Activated CD4-positive, alpha-beta T cell treated with anti-CD3 and anti-CD28 coated beads, Interleukin-2, amount 10 ng/mL, durations not matched to agents 24 days and 14 days (primary cell): ENCODE measurements at regions of chr7 and their contacts with region 1.

Region 1: DNA sequence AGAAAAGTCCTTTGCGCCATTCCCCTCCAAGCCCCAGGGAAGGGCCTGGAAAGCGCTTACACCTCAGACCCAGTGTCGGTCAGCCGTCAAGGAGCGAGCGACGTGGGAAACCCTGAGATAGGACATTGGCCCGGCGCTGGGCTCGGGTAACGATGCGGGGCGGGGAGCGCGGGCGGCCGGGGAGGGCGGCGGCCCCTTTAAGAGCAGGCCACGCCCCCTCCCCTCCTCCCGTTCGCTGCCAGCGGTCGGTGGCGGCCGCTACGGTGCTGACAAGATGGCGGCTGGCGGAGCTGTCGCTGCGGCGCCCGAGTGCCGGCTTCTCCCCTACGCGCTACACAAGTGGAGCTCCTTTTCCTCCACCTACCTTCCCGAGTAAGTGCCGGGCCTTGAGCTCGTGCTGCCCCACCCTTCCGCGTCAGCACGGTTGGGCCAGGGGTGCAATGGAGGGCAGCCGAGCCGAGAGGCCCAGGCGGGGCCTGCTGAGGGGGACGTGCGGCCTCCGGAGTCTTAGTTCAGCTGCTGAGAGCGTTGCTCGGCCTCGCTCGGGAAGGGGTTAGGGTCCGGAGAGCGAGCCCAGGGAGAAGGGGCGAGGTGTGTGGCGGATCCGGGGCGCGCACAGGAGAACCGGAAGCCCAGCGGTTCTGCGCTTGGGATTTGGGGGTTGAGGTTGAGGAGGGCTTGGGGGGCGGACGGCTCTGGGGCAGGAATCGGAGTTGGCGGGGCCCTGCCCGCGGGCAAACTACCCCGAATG is at the start of gene MKLN1:
- DNase-seq: peak; percentile 97
- H3K4me3 Mint-ChIP-seq: peak within 1 kb of the TSS; percentile 99
- H3K27ac Mint-ChIP-seq: peak within 1 kb of the TSS; percentile 97
- H3K4me1 Mint-ChIP-seq: peaks cover 45% of the 10 kb centered on the region
- H3K27me3 Mint-ChIP-seq: no peaks in the 10 kb centered on the region
- total RNA-seq, gene MKLN1: 38.3 and 38.8 TPM in 2 replicates

Region 2: DNA sequence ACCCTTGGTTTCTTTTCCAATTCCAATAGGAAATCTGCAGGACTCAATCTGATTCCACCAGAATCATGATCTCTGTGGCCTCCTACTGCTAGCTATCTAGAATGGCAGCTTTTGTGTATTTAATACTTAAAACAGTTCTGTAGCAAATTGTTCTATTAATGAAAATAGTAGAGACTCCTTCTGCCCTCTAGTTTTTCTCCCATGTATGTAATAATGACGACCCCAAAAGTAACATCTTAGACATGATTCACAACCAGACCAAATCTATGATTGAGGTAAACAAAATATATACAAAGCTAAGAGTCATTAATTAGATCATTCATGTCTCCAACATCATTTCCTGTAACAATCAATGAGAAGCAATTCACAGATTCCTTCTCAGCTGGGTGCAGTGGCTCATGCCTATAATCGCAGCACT is 259.2 kb before region 1 on chr7:
- intact Hi-C with region 1: loop called (anchors 5 kb)
- DNase-seq: no peak
- H3K4me3 Mint-ChIP-seq: no peak overlapping the region
- H3K27ac Mint-ChIP-seq: peak overlapping the region; percentile 14
- H3K4me1 Mint-ChIP-seq: peaks cover 25% of the 10 kb centered on the region
- H3K27me3 Mint-ChIP-seq: no peaks in the 10 kb centered on the region

Region 3: DNA sequence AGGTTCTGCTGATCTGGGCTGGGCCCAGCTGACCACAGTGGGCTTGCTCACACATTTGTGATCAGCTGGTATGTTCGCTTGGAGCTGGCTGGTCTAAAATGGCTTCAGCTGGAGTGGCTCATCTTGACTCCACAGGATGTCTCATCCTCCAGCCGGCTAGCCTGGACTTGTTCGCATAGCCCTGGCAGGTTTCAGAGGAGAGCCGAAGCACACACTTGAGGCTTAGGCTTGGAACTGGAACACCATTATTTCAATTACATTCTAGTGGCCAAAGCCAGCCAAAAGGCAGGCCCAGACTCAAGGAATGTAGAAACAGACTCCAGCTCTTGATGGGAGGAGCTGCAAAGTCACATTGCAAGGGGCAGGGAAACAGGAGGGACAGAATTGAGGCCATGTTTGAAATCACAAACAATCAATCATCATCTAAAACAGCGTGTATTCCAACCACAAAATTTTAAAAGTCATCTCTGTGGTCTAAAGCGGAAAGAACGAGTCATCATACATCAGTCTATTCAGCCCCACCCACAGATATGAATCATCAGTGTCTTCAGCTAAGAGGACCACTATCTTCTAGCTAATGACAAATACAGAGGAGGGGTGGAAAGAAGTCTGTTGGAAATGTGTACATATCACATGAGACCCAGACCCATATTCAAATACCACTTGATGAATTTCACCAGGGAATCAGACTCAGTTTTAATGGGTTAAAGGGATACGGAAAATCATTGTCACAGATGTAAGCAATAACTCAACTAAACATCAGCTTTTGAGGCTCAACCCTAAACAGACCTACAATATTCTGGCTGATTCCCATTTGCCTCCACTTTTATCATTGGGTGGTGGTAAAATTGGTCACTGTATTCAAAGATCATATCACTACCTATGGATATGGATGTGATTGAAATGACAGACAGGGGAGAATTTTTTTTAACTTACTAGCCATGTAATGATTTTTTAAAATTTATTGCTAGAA is 139.1 kb before region 1 on chr7:
- intact Hi-C with region 1: loop called (anchors 1 kb)
- DNase-seq: peak; percentile 89
- H3K4me3 Mint-ChIP-seq: peak overlapping the region; percentile 38
- H3K27ac Mint-ChIP-seq: peak overlapping the region; percentile 90
- H3K4me1 Mint-ChIP-seq: peaks cover 47% of the 10 kb centered on the region
- H3K27me3 Mint-ChIP-seq: no peaks in the 10 kb centered on the region

Region 4: GRCh38 chr7:131231381-131232220 is 96.2 kb before region 1 on chr7:
- intact Hi-C with region 1: loop called (anchors 1 kb)
- DNase-seq: peak; percentile 90
- H3K4me3 Mint-ChIP-seq: peak overlapping the region; percentile 72
- H3K27ac Mint-ChIP-seq: peak overlapping the region; percentile 87
- H3K4me1 Mint-ChIP-seq: peaks cover 59% of the 10 kb centered on the region
- H3K27me3 Mint-ChIP-seq: peaks cover 1% of the 10 kb centered on the region

Region 5: GRCh38 chr7:131370523-131370968 is 42.7 kb after region 1 on chr7:
- intact Hi-C with region 1: loop called (anchors 5 kb)
- DNase-seq: peak; percentile 82
- H3K4me3 Mint-ChIP-seq: no peak overlapping the region
- H3K27ac Mint-ChIP-seq: no peak overlapping the region
- H3K4me1 Mint-ChIP-seq: peaks cover 41% of the 10 kb centered on the region
- H3K27me3 Mint-ChIP-seq: no peaks in the 10 kb centered on the region

Region 6: DNA sequence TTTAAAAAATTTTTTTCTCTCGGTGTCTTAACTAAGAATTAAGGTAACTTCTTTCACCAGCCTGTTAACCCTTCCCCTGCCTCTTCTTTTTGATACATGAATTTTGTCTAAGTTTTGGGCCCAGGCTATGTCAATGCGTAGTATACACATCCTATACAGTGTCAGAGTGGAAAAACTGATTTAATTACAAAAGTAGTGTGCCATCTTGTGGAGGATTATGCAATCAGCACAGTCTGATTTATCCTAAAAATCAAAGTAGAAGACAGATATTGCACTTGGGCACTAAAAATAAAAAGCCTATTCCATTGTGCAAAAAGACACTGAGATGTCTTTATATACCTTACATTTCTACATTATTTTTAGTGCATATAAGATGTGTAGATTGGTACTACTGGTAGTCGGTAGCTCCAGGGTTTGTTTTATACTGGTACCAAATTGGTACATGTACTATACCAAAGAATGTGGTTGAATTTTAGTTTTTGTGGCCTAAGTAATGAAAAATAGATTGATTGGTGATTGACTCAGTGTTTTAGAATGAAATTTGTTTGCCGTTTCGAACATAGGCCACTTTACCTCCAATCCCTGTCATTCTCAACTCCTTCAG is 96.5 kb after region 1 on chr7:
- intact Hi-C with region 1: loop called (anchors 5 kb)
- DNase-seq: peak; percentile 71
- H3K4me3 Mint-ChIP-seq: no peak overlapping the region
- H3K27ac Mint-ChIP-seq: no peak overlapping the region
- H3K4me1 Mint-ChIP-seq: peaks cover 2% of the 10 kb centered on the region
- H3K27me3 Mint-ChIP-seq: no peaks in the 10 kb centered on the region

Region 7: DNA sequence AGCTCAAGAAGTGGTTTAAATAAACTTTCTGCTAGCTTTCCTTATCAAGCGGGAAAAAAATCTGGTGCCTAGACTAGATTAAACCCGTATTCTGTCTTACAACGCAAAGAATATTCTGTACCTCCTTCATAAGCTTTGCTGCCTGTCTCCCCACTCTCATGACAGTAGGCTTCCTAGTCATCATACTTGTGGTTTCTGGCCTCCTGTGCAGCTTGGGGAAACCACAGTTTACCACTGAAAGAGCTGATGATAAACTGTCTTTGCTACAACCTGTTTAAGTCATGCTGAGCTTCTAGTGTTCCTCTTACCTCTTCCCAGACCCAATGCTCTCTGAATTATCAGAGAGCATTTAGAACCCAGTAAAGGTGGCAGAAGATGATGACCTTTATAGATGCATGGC is 173.6 kb after region 1 on chr7:
- intact Hi-C with region 1: loop called (anchors 5 kb)
- DNase-seq: peak; percentile 90
- H3K4me3 Mint-ChIP-seq: peak overlapping the region; percentile 42
- H3K27ac Mint-ChIP-seq: peak overlapping the region; percentile 68
- H3K4me1 Mint-ChIP-seq: peaks cover 34% of the 10 kb centered on the region
- H3K27me3 Mint-ChIP-seq: no peaks in the 10 kb centered on the region